Stomach (tissue), 19 donors: ENCODE measurements at regions of chr3 and their contacts with region 1.

Region 1: DNA sequence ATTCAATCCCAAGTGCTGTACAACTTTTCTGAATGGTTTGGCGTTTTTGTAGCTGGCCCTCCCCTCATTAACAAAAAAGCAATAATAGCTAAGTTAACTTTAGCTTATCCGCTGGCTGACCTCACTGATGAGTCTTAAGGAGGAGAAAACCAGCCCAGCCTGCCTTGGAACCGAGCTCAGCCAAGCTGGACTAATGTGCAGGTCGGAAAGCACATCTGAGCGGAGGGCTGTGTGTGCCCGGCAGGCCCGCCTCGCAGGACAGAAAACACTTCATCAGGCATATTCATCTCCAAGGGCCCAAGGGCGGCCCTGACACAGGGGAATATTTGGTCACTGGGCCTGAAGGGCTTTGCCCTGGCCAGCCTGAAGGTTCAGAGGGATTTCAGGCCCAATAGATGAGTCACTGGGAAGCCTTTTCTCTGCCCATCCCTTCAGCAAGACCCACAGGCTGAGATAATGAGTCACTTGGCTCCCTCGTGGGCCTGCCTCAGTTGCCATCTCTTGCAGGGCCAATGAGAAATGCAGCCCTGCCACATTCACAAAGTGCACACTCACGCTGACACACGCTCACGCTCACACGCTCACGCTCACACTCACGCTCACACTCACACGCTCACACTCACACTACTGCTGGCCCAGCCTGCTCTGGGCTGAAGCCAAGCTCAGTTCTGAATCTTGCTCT is 75.1 kb downstream of the SLC12A8 start:
- DNase-seq: peak in 1 of 2 donors; percentile 53
- H3K4me3 ChIP-seq: no peak overlapping the region
- H3K27ac ChIP-seq: peak overlapping the region in 3 of 5 donors; percentile 4 to 58 (median 19)
- H3K4me1 ChIP-seq: peaks cover 10 to 28% (median 15%) of the 10 kb centered on the region in 4 donors
- H3K27me3 ChIP-seq: no peaks in the 10 kb centered on the region
- CTCF ChIP-seq: no peak
- EP300 ChIP-seq: no peak
- POLR2A ChIP-seq: no peak

Region 2: GRCh38 chr3:124860599-124860998 is 276.9 kb before region 1 on chr3:
- intact Hi-C with region 1: no loop called
- DNase-seq: peak; percentile 33 to 46
- H3K4me3 ChIP-seq: no peak overlapping the region
- H3K27ac ChIP-seq: peak overlapping the region in 4 of 5 donors; percentile 31 to 70 (median 66)
- H3K4me1 ChIP-seq: peaks cover 4 to 48% (median 26%) of the 10 kb centered on the region in 4 donors
- H3K27me3 ChIP-seq: no peaks in the 10 kb centered on the region
- CTCF ChIP-seq: no peak
- EP300 ChIP-seq: peak; percentile 6
- POLR2A ChIP-seq: no peak

Region 3: DNA sequence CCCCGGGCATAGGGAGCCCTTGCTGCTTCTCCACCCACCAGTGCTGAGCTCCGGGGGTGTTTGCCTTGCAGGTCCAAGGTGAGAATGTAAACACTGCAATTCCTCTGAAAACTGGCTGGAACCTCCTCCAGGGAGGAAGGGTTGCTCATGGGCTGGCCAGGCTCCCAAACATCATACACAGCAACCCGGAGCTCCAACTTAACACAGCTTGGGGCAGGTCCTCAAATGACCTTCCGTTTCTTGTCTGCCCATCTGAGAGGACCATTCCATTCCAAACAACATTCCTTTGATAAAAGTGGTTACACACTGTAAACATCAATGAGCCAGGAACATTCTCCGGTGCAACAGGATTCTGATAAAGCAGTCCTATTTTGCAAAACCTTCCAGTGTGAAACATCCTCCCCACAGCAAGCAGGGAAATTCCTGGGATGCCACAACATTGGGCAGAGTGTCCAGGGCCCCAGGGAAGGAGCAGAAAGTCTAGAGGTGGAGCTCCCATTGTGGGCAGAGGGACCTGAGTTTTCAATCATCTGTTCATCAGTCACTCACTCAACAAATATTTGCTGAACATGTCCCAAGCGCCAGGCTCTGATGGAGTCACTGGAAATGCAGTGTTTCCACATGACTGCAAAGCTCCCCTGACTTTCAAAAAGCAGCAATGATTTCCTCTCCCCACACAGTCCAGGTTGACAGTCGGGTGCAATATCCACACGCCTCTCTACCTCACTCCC is 74.4 kb before region 1 on chr3:
- intact Hi-C with region 1: loop called (anchors 10 kb)
- DNase-seq: peak in 1 of 2 donors; percentile 40
- H3K4me3 ChIP-seq: no peak overlapping the region
- H3K27ac ChIP-seq: peak overlapping the region in 4 of 5 donors; percentile 1 to 76 (median 42)
- H3K4me1 ChIP-seq: peaks cover 18 to 33% (median 24%) of the 10 kb centered on the region in 4 donors
- H3K27me3 ChIP-seq: no peaks in the 10 kb centered on the region
- CTCF ChIP-seq: no peak
- EP300 ChIP-seq: no peak
- POLR2A ChIP-seq: no peak